ENCODE measurements at regions of chr17 and their contacts with region 1.

Region 1: DNA sequence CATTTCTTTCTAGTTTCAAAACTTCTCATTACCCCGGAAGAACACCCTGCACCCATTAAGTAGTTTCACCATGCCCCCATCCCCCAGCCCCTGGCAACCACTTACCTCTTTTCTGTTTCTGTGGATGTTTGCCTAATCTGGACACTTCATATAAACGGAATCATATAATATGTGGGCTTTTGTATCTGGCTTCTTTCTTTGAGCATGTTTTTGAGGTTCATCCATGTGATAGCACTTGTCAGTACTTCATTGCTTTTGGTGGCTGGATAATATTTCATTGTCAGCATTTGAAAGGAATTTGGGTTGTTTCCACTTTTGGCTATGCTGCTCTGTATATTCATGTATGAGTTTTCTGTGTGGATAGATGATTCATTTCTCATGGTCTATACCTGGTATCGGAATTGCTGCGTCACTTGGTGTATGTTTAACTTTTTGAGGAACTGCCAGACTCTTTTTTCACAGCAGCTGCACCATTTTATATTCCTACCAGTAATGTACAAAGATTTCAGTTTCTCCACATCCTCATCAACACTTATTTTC is 30.0 kb upstream of the SLC5A10 start:
- DNase-seq: peak; percentile 45
- H3K4me3 ChIP-seq: peak overlapping the region; percentile 41
- H3K27ac ChIP-seq: peak overlapping the region; percentile 69
- H3K4me1 ChIP-seq: peaks cover 60% of the 10 kb centered on the region
- CTCF ChIP-seq: 0 out of 2 replicates have a peak, but pooled peaks have one; percentile 4

Region 2: GRCh38 chr17:18857864-18858566 is 64.0 kb before region 1 on chr17 and contains the start of gene PRPSAP2:
- CTCF ChIA-PET with region 1: no interaction called
- POLR2A ChIA-PET with region 1: no interaction called
- intact Hi-C with region 1: loop called (anchors 2 kb)
- DNase-seq: peak; percentile 99
- H3K4me3 ChIP-seq: peak within 1 kb of the TSS; percentile 79
- H3K27ac ChIP-seq: peak within 1 kb of the TSS; percentile 73
- H3K4me1 ChIP-seq: peaks cover 47% of the 10 kb centered on the region
- CTCF ChIP-seq: no peak
- total RNA-seq, gene PRPSAP2: 59.3 and 73.5 TPM in 2 replicates

Region 3: DNA sequence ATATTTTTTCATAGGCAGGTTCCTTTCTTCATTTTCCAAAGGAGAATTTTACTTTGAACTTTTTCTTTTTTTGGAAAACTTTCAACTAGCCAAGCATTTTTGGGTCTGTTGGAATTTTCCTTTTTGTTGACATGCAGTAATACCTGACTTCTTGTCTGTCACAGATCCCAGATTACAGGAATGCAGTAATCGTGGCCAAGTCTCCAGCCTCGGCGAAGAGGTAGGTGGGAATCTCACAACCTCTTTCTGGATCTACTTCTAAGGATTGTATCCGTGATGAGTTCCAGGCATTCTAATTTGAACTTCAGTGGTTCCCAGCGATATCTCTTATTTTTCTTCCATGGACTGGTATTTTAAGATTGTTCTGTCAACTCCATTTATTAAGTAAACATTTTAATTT is 32.3 kb before region 1 on chr17:
- CTCF ChIA-PET with region 1: no interaction called
- POLR2A ChIA-PET with region 1: no interaction called
- intact Hi-C with region 1: no loop called
- DNase-seq: no peak
- H3K4me3 ChIP-seq: no peak overlapping the region
- H3K27ac ChIP-seq: no peak overlapping the region
- H3K4me1 ChIP-seq: peaks cover 15% of the 10 kb centered on the region
- CTCF ChIP-seq: no peak

Measured in OCI-LY7 (cell line).